Motor neuron (in vitro differentiated cells): ENCODE measurements at regions of chr18 and their contacts with region 1.

Region 1: DNA sequence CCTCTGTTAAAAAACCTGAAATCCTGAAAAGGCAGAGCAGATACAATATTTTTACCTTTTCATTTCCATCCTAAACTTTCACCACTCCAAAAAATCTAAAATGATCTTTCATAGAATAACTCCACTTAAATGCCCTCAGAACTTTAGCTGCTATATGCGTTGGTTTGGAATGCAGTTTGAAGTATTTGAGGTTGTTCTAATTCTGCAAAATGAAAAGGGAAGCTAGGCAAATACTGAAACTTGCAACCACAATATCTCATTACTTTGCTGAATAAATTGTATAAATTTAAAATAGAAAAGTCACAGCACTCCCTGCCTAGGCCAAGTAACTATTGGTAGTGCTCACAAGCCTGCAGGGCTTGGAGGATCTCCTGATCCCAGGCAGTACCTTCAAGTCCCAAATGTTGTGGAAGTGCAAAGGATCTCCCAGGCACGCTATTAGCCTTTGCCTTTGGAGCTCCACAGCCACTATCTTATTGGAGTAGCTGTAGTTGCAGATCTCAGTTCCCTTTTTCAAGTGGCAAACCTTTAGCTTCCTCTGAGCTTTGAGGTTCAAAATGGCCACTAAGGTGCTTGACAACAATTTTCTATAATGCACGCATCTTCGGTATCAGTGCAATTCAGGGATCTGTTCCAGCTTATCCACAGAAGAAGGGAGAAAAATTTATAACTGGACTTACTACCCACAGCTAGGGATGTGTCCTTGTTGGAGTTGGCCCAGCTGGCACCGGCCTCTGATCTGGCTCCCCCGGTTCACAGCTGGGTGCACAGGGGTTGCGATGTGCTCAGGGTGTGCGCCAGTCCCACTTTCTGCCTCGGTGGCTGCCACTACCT is 43.4 kb upstream of the ANKRD62 start:
- ATAC-seq: no peak
- H3K4me3 ChIP-seq: no peak overlapping the region
- H3K27ac ChIP-seq: no peak overlapping the region
- H3K4me1 ChIP-seq: no peaks in the 10 kb centered on the region

Region 2: GRCh38 chr18:11887305-11888262 is 162.6 kb before region 1 on chr18:
- in situ Hi-C with region 1: no loop called
- ATAC-seq: no peak
- H3K4me3 ChIP-seq: no peak overlapping the region
- H3K27ac ChIP-seq: no peak overlapping the region
- H3K4me1 ChIP-seq: no peaks in the 10 kb centered on the region

Region 3: DNA sequence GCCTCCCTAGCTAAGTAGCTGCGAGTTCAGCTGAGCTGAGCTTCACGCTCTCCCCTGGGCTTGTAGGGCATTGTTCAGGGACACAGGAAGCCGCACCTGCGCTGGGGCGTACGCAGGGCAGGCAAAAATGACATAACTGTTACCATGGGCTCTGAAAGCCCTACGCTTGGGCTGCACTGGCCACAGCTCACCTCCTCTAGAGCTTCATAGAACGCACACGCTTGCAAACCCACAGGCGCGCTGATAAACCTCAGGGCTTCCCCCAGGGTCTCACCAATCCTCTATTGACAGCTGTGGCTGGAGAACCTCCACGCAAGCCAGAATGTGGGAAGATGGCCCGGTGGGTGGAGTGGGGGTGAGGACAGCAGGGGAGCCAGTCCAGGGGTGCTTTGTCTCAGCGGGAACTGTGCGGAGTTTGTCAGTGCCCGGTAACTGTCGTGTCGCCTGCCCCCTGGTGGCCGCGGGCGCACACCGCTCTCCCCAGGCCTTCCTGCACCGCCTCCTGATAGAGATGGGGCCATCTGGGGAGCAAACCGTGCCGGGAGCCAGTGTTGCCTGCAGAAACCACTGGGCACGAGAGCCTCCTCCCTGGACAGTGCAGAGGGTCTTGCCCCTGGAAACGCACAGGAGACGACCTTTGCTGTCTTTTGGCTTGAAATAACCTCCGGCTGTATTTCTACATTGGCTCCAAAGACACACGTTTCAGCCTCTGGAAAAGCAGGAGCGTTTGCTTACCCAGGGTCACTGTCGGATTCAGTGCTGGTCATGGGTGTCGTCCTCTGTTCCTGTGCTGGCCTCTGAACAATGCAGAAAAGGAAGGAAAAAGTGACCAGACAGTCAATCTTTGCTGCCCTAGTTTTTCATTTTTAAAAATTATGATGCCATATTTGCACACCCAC is 187.0 kb after region 1 on chr18:
- in situ Hi-C with region 1: loop called in 1 of 9 experiments (anchors 25 kb)
- ATAC-seq: peak; percentile 95 to 100 (median 99)
- H3K4me3 ChIP-seq: no peak overlapping the region
- H3K27ac ChIP-seq: no peak overlapping the region
- H3K4me1 ChIP-seq: no peaks in the 10 kb centered on the region